Prostate gland (tissue), 2 donors: ENCODE measurements at regions of chr17 and their contacts with region 1.

Region 1: GRCh38 chr17:37373530-37374159 is 2.1 kb upstream of the C17orf78 start:
- DNase-seq: peak; percentile 80
- H3K4me3 ChIP-seq: no peak overlapping the region
- H3K27ac ChIP-seq: no peak overlapping the region
- H3K4me1 ChIP-seq: no peaks in the 10 kb centered on the region
- H3K27me3 ChIP-seq: no peaks in the 10 kb centered on the region
- CTCF ChIP-seq: peak; percentile 82 to 99 (median 92)
- POLR2A ChIP-seq: no peak

Region 2: GRCh38 chr17:37259030-37259735 is 114.5 kb before region 1 on chr17:
- intact Hi-C with region 1: loop called (anchors 10 kb)
- DNase-seq: no peak
- H3K4me3 ChIP-seq: no peak overlapping the region
- H3K27ac ChIP-seq: no peak overlapping the region
- H3K4me1 ChIP-seq: no peaks in the 10 kb centered on the region
- H3K27me3 ChIP-seq: no peaks in the 10 kb centered on the region
- CTCF ChIP-seq: no peak
- POLR2A ChIP-seq: no peak